ENCODE measurements at regions of chr16 and their contacts with region 1.

Region 1: GRCh38 chr16:58336332-58337089 is 41.7 kb upstream of the PRSS54 start:
- DNase-seq: peak; percentile 77
- H3K4me3 Mint-ChIP-seq: peak overlapping the region; percentile 35
- H3K27ac Mint-ChIP-seq: no peak overlapping the region
- H3K4me1 Mint-ChIP-seq: no peaks in the 10 kb centered on the region
- H3K27me3 Mint-ChIP-seq: no peaks in the 10 kb centered on the region
- CTCF ChIP-seq: peak; percentile 86

Region 2: DNA sequence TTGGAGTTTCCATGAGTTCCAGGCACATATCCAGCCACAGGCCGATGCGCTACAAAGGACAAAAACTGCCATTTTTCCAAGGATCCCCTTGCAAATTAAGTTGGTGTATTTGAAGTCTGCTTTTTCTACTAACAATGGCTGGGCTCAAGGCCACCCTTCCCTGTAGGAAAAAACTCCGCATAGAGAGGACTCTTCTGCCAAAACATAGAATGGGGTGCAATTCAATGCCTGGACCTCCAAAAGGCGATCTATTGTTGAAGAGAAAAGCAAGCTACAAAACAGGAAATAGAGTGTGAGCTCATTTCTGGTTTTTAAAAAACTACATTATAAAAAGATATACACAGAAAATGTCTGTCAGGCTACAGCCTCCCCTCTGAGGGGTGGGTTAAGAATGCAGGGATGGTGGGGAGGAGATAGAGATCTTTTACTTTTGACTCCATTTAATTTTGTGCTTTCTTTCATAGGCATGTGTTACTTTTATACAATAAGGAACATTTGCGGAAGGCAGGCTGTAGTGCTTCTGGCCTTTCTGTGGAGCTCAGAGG is 18.8 kb before region 1 on chr16:
- CTCF ChIA-PET with region 1: interaction called, 26 read pairs
- POLR2A ChIA-PET with region 1: no interaction called
- intact Hi-C with region 1: no loop called
- DNase-seq: no peak
- H3K4me3 Mint-ChIP-seq: no peak overlapping the region
- H3K27ac Mint-ChIP-seq: no peak overlapping the region
- H3K4me1 Mint-ChIP-seq: no peaks in the 10 kb centered on the region
- H3K27me3 Mint-ChIP-seq: no peaks in the 10 kb centered on the region
- CTCF ChIP-seq: no peak

Region 3: GRCh38 chr16:58487566-58488351 is 151.2 kb after region 1 on chr16:
- CTCF ChIA-PET with region 1: interaction called, 170 read pairs
- POLR2A ChIA-PET with region 1: interaction called, 25 read pairs
- intact Hi-C with region 1: loop called (anchors 1 kb)
- DNase-seq: peak; percentile 77
- H3K4me3 Mint-ChIP-seq: no peak overlapping the region
- H3K27ac Mint-ChIP-seq: no peak overlapping the region
- H3K4me1 Mint-ChIP-seq: no peaks in the 10 kb centered on the region
- H3K27me3 Mint-ChIP-seq: no peaks in the 10 kb centered on the region
- CTCF ChIP-seq: peak; percentile 89

Region 4: GRCh38 chr16:58509256-58510096 is 173.0 kb after region 1 on chr16:
- CTCF ChIA-PET with region 1: interaction called, 10 read pairs
- POLR2A ChIA-PET with region 1: no interaction called
- intact Hi-C with region 1: no loop called
- DNase-seq: no peak
- H3K4me3 Mint-ChIP-seq: no peak overlapping the region
- H3K27ac Mint-ChIP-seq: no peak overlapping the region
- H3K4me1 Mint-ChIP-seq: peaks cover 6% of the 10 kb centered on the region
- H3K27me3 Mint-ChIP-seq: no peaks in the 10 kb centered on the region
- CTCF ChIP-seq: no peak

Region 5: GRCh38 chr16:58661199-58661830 is 324.8 kb after region 1 on chr16:
- CTCF ChIA-PET with region 1: interaction called, 5 read pairs
- POLR2A ChIA-PET with region 1: no interaction called
- intact Hi-C with region 1: loop called (anchors 1 kb)
- DNase-seq: peak; percentile 90
- H3K4me3 Mint-ChIP-seq: no peak overlapping the region
- H3K27ac Mint-ChIP-seq: no peak overlapping the region
- H3K4me1 Mint-ChIP-seq: no peaks in the 10 kb centered on the region
- H3K27me3 Mint-ChIP-seq: no peaks in the 10 kb centered on the region
- CTCF ChIP-seq: peak; percentile 57